Activated naive CD4-positive, alpha-beta T cell treated with anti-CD3 and anti-CD28 coated beads for 36 hours (primary cell): ENCODE measurements at regions of chr17 and their contacts with region 1.

Region 1: DNA sequence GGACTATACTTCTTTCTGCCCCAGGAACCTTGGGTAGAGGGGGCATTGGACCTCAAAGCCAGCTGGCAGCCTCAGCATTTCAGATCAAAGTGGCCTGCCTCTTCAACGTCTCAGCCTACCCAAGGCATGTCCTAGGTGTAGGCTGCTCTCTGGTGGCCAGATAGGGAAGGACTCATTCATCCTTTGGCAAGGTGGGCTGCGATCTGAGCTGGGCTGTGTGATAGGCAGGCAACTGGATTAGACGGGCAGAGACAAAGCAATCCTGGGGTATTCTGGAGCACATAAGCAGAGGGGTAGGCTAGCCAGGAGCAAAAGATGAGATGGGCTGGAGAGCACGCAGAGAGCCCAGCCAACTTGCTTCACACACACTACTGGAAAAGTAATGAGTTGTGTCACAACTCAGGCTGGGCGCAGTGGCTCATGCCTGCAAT is 8.8 kb upstream of the NAGLU start:
- DNase-seq: peak; percentile 86
- H3K4me3 Mint-ChIP-seq: no peak overlapping the region
- H3K27ac Mint-ChIP-seq: no peak overlapping the region
- H3K4me1 Mint-ChIP-seq: peaks cover 32% of the 10 kb centered on the region
- H3K27me3 Mint-ChIP-seq: no peaks in the 10 kb centered on the region

Region 2: GRCh38 chr17:42428141-42428944 is 98.9 kb before region 1 on chr17:
- CTCF ChIA-PET with region 1: interaction called, 8 read pairs
- intact Hi-C with region 1: loop called (anchors 1 kb)
- DNase-seq: peak; percentile 57
- H3K4me3 Mint-ChIP-seq: no peak overlapping the region
- H3K27ac Mint-ChIP-seq: no peak overlapping the region
- H3K4me1 Mint-ChIP-seq: peaks cover 4% of the 10 kb centered on the region
- H3K27me3 Mint-ChIP-seq: peaks cover 9% of the 10 kb centered on the region